ENCODE measurements at regions of chr5 and their contacts with region 1.

Region 1: GRCh38 chr5:174056064-174056847 is 10.8 kb downstream of the NSG2 start:
- DNase-seq: no peak
- ATAC-seq: peak; percentile 56
- H3K4me3 ChIP-seq: no peak overlapping the region
- H3K27ac ChIP-seq: no peak overlapping the region
- H3K4me1 ChIP-seq: no peaks in the 10 kb centered on the region
- H3K27me3 ChIP-seq: no peaks in the 10 kb centered on the region; a peak in 1 of 4 replicates
- CTCF ChIP-seq: peak; percentile 10 to 40 (median 38); a peak in 5 of 6 replicates
- EP300 ChIP-seq: no peak
- POLR2A ChIP-seq: no peak
- RAD21 ChIP-seq: no peak

Region 2: DNA sequence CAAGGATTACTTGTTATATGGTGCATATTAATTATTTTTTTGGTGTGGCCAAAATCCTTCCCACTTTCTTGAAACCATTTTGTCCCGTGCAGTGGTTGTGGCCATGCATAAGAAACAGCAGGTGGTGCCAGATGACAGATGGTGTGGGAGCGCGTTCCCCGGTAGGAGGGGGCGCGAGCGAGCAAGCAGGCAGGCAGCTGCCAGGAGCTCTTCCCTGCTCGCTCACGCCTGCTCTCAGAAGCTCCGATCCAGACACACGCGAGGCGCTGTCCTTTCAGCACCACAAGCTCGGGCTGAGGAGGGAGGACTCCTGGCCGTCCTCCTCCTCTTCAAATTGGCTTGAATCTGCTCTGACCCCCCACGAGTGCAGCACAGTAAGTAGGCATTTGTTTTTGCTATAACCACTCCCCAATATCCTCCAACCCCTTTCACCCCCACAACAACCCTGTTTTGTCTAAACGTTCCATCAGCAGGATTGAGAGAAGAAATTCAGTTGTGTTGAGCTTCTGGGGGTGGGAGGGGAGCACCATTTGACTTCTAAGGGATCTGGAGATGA is 10.7 kb before region 1 on chr5 and contains the start of gene NSG2:
- CTCF ChIA-PET with region 1: interaction called, 11 read pairs
- POLR2A ChIA-PET with region 1: no interaction called
- RAD21 ChIA-PET with region 1: interaction called, 3 read pairs
- SMC1A ChIA-PET with region 1: interaction called, 4 read pairs
- in situ Hi-C with region 1: no loop called
- intact Hi-C with region 1: no loop called
- DNase-seq: peak; percentile 16
- ATAC-seq: peak; percentile 99
- H3K4me3 ChIP-seq: no peak within 1 kb of the TSS
- H3K27ac ChIP-seq: no peak within 1 kb of the TSS
- H3K4me1 ChIP-seq: no peaks in the 10 kb centered on the region
- H3K27me3 ChIP-seq: no peaks in the 10 kb centered on the region
- CTCF ChIP-seq: peak; percentile 70 to 92 (median 74)
- EP300 ChIP-seq: no peak
- POLR2A ChIP-seq: no peak
- RAD21 ChIP-seq: peak; percentile 97
- polyA plus RNA-seq, gene NSG2: not detected